BJ (cell line): ENCODE measurements at regions of chr2 and their contacts with region 1.

Region 1: DNA sequence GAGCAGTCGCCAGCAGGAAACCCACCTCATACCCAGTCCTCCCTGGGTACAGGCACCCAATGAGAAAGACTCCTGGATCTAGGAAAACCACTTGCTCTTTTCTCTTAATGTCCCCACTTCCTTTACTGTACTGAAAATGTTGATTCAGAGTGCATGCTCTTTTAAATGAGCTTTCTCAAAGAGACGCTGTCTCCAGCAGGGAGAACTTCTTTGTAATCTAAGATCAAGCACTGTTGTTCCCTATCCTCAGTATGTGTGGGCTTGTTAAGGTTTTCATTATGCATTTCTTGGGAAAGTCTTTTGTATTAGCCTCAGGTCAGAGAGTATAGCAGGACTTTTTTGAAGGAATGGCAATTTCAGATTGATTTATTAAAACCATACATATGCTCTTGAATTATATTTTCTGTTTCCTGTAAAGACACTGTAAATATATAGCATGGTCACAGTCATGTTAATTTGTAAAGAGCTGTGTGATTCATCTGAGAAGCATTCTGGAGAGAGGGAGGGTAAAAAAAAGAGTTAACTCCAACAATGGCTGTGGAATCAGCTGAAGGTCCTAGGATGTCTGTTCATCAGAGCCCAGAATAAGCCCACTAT is 178.1 kb downstream of the MGAT5 start:
- DNase-seq: no peak
- H3K4me3 ChIP-seq: no peak overlapping the region
- H3K27me3 ChIP-seq: no peaks in the 10 kb centered on the region
- CTCF ChIP-seq: no peak

Region 2: DNA sequence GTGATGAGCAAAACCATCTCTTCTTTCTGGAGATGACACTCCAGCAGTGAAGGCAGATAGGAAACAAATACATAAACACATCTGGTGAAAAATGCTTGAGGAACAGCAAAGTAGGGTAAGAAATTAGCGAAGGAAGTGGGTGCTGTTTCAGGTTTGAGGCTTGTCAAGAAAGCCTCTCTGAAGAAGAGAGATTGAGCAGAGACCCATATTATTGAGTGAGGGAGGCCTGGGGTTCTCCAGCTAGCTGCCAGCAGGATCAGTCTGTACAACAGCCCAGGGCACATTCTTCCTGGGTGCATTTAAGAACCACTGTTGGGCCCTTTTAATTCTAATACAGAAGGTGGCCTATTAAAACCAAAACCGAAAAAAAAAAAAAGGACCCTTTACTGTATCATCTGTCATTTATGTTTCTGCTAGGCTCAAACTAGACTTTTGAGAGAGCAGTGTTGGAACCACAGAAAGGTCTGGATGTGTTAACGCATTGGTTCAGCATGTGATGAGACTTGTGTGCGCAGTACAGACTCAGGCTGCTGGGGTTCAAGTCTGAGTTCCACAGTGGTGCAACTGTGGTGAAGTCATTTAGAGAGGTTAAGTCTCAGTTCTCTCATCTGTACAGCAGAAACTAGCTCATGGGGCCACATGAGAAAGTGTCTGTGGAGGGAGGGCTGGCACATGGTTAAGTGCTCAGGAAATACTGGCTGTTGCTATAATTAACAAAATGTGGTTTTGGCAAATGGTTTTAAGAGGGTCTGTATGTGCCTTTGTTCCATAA is 149.1 kb before region 1 on chr2:
- CTCF ChIA-PET with region 1: no interaction called
- POLR2A ChIA-PET with region 1: interaction called, 10 read pairs
- DNase-seq: no peak
- H3K4me3 ChIP-seq: no peak overlapping the region
- H3K27me3 ChIP-seq: no peaks in the 10 kb centered on the region
- CTCF ChIP-seq: no peak

Region 3: DNA sequence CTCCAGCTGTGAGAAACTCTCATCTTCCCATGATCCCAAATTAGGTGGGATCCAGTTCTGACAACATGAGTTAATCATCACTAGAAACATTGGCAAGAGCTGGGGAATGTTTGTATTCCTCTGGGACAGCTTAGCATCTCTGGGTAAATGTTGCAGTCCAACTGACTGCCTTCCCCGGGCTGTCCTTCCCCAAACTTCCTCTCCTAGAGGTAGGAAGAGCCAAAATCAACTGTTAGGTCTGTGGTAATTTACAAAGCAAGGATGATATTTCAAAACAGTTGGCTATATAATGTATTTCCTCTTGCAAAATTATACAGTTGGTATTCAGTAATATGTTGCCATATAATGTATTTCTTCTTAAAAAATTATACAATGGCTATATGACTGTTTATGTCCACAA is 29.5 kb before region 1 on chr2:
- CTCF ChIA-PET with region 1: no interaction called
- POLR2A ChIA-PET with region 1: no interaction called
- DNase-seq: no peak
- H3K4me3 ChIP-seq: no peak overlapping the region
- H3K27me3 ChIP-seq: no peaks in the 10 kb centered on the region
- CTCF ChIP-seq: no peak

Region 4: GRCh38 chr2:134446383-134447017 is 14.6 kb after region 1 on chr2:
- CTCF ChIA-PET with region 1: interaction called, 62 read pairs
- POLR2A ChIA-PET with region 1: no interaction called
- DNase-seq: no peak
- H3K4me3 ChIP-seq: no peak overlapping the region
- H3K27me3 ChIP-seq: no peaks in the 10 kb centered on the region
- CTCF ChIP-seq: no peak

Region 5: DNA sequence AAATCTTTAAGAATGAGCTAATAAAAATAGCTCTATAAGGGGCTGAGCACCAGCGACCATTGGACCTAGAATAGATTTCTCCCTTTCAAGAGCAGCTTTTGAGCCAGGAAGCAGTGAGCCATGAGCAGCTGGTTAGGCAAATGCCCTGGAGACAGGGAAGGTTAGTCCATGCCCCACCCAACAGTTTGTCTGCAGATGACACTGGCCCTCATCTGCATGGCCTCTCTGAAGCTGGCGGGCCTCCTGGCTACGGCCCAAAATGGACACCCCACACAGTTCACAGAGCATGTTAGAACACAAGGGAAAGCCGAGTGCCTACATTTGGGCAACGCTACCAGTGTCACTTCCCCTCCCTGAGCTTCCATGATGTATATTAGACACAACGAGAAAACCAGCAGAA is 23.0 kb after region 1 on chr2:
- CTCF ChIA-PET with region 1: interaction called, 62 read pairs
- POLR2A ChIA-PET with region 1: no interaction called
- DNase-seq: no peak
- H3K4me3 ChIP-seq: no peak overlapping the region
- H3K27me3 ChIP-seq: no peaks in the 10 kb centered on the region
- CTCF ChIP-seq: no peak